ENCODE measurements at regions of chr1 and their contacts with region 1.

Region 1: DNA sequence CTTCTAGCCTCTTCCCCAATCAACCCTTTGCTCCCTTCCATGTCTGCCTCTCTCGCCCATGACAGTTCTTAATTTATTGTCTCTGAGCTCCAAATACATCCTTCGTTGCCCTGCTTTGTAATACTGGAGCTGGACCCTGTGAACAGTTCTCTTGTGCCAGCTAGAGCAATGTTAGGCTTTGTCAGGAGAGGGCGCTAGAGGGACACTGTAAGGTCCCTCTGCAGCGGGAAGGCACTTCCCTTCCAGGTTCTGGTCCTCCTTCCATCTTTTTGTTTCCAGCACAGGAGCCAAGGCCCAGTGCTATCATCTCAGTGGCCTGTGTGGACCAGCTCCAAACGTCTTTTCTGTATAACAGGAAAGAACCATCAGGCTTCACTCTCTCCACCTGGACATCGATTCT is 95.9 kb downstream of the PTPRU start:
- DNase-seq: peak; percentile 14
- H3K4me3 ChIP-seq: no peak overlapping the region
- H3K27ac ChIP-seq: no peak overlapping the region
- H3K4me1 ChIP-seq: no peaks in the 10 kb centered on the region
- H3K27me3 ChIP-seq: no peaks in the 10 kb centered on the region
- CTCF ChIP-seq: peak; percentile 40 to 54

Region 2: GRCh38 chr1:29453502-29454240 is 121.5 kb after region 1 on chr1:
- CTCF ChIA-PET with region 1: no interaction called
- dilution Hi-C with region 1: no loop called
- in situ Hi-C with region 1: no loop called
- intact Hi-C with region 1: loop called (anchors 10 kb)
- DNase-seq: peak; percentile 15
- H3K4me3 ChIP-seq: no peak overlapping the region
- H3K27ac ChIP-seq: no peak overlapping the region
- H3K4me1 ChIP-seq: no peaks in the 10 kb centered on the region
- H3K27me3 ChIP-seq: no peaks in the 10 kb centered on the region
- CTCF ChIP-seq: peak; percentile 28 to 43